Endothelial cell of umbilical vein (primary cell): ENCODE measurements at regions of chr6 and their contacts with region 1.

Region 1: DNA sequence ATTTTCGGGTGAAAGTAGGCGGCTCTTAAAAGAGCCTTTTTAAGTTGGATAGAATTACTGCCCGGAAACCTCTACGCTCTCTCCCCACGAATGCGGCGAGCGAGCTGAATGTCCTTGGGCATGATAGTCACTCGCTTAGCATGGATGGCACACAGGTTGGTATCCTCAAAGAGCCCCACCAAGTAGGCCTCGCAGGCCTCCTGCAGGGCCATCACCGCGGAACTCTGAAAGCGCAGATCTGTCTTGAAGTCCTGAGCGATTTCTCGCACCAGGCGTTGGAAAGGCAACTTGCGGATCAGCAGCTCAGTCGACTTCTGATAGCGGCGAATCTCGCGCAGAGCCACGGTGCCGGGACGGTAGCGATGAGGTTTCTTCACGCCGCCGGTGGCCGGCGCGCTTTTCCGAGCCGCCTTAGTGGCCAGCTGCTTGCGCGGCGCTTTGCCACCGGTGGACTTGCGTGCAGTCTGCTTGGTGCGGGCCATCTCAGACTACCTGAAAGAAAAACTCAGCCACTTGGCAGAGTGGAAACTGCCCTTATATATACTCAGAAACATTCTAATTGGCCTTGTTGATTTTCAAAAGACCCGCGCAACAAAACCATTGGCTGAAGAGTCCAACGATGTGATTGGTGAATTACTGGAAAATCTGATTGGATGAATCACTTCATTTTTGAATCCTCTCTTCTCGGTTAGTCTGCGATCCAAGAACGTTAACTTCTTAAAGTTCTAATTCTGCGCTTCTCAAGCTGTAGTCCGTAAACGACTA is 93.9 kb upstream of the BTN3A2 start:
- DNase-seq: peak; percentile 93
- H3K4me3 ChIP-seq: peak overlapping the region; percentile 41 to 77 (median 51)
- H3K27ac ChIP-seq: peak overlapping the region; percentile 72
- H3K4me1 ChIP-seq: peaks cover 25% of the 10 kb centered on the region
- H3K27me3 ChIP-seq: no peaks in the 10 kb centered on the region
- CTCF ChIP-seq: no peak
- POLR2A ChIP-seq: peak; percentile 90

Region 2: DNA sequence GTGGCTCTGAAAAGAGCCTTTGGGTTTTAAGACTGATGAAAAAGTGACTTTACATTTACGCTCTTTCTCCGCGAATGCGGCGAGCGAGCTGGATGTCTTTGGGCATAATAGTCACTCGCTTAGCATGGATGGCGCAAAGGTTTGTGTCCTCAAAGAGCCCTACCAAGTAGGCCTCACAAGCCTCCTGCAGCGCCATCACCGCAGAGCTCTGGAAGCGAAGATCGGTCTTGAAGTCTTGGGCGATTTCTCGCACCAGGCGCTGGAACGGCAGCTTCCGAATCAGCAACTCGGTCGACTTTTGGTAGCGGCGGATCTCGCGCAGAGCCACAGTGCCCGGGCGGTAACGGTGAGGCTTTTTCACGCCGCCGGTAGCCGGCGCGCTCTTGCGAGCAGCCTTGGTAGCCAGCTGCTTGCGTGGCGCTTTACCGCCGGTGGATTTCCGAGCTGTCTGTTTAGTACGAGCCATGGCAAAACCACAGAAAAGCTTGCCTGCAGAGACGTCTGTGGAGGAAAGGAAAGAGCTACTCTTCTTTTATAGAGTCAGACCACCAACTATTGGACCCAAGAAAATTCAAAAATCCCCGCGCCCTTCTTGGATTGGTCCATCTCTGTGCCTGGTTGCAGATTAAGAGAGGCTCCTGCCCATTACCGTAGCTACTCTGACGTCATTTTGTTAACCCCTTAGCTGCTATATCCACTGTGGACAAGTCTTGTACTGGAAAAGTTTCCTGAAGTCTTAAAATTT is 239.3 kb before region 1 on chr6:
- CTCF ChIA-PET with region 1: no interaction called
- POLR2A ChIA-PET with region 1: no interaction called
- dilution Hi-C with region 1: no loop called
- intact Hi-C with region 1: loop called (anchors 5 kb)
- DNase-seq: peak; percentile 96
- H3K4me3 ChIP-seq: peak overlapping the region; percentile 45 to 78 (median 47)
- H3K27ac ChIP-seq: peak overlapping the region; percentile 88
- H3K4me1 ChIP-seq: peaks cover 33% of the 10 kb centered on the region
- H3K27me3 ChIP-seq: no peaks in the 10 kb centered on the region
- CTCF ChIP-seq: peak in 1 of 2 donors; percentile 29
- POLR2A ChIP-seq: peak; percentile 99

Region 3: DNA sequence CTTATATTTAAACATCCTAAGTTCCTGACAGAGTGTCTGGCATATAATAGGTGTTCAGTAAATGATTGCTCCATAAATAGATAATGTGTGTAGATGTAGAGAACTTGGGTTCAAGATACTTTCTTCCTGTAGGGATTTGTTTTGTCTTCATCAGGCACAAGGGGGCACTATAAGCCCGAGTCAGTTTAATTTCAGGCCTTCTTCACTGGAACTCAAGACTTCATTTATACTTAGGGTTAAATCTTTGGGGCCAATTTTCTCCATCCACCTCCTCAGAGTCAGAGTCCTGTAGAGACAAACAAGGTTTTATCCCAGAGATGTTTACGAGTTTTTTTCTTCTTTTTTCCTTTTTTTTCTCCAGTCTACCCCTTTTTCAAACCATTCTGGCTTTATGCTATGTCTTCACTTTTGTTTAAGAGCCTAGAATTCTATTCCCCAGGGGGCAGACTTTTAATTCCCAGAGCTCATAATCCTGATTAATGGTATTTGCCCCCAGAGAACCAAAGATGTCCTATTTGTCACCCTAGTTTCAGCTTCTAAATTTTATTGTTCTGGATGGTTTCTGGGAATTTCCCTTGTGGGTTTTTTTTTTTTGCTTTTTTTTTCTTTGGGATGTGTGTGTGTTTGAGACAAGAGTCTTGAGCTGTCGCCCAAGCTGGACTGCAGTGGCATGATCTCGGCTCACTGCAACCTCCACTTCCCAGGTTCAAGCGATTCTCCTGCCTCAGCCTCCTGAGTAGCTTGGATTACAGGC is 95.5 kb before region 1 on chr6:
- CTCF ChIA-PET with region 1: no interaction called
- POLR2A ChIA-PET with region 1: no interaction called
- dilution Hi-C with region 1: no loop called
- intact Hi-C with region 1: loop called (anchors 1 kb)
- DNase-seq: peak; percentile 85
- H3K4me3 ChIP-seq: no peak overlapping the region
- H3K27ac ChIP-seq: no peak overlapping the region
- H3K4me1 ChIP-seq: peaks cover 11% of the 10 kb centered on the region
- H3K27me3 ChIP-seq: no peaks in the 10 kb centered on the region
- CTCF ChIP-seq: peak; percentile 46 to 51
- POLR2A ChIP-seq: no peak

Region 4: DNA sequence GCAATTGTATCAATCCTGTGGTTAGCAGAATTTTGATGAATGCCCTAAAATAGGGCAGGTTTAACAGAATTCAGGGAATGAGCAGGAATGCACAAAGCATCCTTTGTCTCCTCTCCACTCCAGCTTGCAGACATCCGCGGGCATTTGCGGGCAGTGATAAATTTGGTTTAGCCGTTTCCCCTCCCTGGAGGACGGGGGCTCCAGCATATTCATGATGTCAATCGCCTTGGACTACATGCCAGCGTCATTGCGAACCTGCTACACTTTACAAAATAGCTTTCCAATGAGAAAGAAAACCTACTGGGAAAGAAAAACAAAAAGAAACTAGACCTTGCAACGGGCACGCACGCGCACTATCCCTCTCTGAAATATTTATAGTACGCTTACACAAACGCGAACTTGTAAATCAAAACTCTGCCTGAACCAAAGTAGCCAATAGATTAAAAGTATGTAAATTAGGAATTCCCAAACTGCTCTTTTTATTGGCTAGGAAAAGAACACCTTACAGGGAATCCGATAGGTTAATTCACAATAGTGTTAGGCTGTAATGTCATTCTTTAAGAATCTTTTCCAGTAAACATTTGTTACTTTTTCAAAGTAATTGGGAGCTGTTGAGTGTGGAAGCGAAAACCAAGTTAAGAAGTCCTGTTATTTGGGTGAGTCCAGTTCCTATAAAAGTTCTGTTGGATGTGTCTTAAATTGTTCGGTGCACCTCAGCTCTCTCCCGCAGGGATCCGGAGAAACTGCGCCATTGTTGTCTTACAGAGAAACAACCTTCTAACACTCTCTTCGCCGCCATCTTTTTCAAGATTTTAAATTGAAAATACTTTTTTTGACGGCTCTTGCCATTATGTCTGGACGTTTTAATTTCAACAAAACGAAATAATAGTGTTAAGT is 47.2 kb before region 1 on chr6:
- CTCF ChIA-PET with region 1: no interaction called
- POLR2A ChIA-PET with region 1: interaction called, 6 read pairs
- dilution Hi-C with region 1: no loop called
- intact Hi-C with region 1: loop called (anchors 2 kb)
- DNase-seq: peak; percentile 94
- H3K4me3 ChIP-seq: peak overlapping the region; percentile 47 to 94 (median 77)
- H3K27ac ChIP-seq: peak overlapping the region; percentile 96
- H3K4me1 ChIP-seq: peaks cover 14% of the 10 kb centered on the region
- H3K27me3 ChIP-seq: no peaks in the 10 kb centered on the region
- CTCF ChIP-seq: no peak
- POLR2A ChIP-seq: peak; percentile 71

Region 5: GRCh38 chr6:26240154-26241032 is 30.7 kb before region 1 on chr6:
- CTCF ChIA-PET with region 1: interaction called, 3 read pairs
- POLR2A ChIA-PET with region 1: interaction called, 18 read pairs
- dilution Hi-C with region 1: no loop called
- intact Hi-C with region 1: loop called (anchors 1 kb)
- DNase-seq: peak; percentile 85
- H3K4me3 ChIP-seq: peak overlapping the region; percentile 40 to 77 (median 66)
- H3K27ac ChIP-seq: peak overlapping the region; percentile 79
- H3K4me1 ChIP-seq: peaks cover 3% of the 10 kb centered on the region
- H3K27me3 ChIP-seq: no peaks in the 10 kb centered on the region
- CTCF ChIP-seq: no peak
- POLR2A ChIP-seq: peak; percentile 98

Region 6: DNA sequence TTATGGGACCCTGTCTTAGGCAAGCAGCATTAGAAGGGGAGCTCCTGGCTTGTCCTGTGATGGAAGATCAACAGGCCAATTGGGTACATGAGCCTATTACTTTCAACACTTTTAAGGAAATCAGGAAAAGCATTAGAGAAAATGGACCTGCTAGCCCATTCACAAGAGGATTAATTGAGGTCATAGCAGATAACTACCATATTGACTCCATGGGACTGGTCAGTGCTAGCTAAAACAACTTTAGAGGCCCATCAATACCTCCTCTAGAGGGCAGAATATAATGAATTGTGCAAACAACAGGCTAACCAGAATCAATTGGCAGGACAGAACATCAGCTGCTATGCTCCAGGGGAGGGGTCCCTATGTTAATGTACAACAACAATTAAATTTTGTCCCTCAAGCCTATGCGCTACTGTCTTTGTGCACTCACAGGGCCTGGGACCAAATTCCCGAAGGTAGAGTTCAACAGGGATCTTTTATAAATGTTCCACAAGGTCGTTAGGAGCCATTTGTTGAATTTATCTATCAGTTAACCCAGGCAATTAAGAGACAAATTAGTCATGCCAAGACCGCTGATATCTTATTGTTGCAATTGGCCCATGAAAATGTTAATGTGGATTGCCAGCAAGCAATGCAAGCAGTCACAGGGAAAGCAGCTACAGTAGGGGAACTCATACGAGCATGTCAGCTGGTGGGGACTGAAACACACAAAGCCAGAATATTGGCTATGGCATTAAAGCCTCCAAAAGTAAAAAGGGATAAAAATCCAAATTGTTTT is 12.7 kb before region 1 on chr6:
- CTCF ChIA-PET with region 1: interaction called, 29 read pairs
- POLR2A ChIA-PET with region 1: interaction called, 4 read pairs
- dilution Hi-C with region 1: no loop called
- intact Hi-C with region 1: no loop called
- DNase-seq: no peak
- H3K4me3 ChIP-seq: no peak overlapping the region
- H3K27ac ChIP-seq: no peak overlapping the region
- H3K4me1 ChIP-seq: no peaks in the 10 kb centered on the region
- H3K27me3 ChIP-seq: peaks cover 12 to 13% of the 10 kb centered on the region in 2 experiments
- CTCF ChIP-seq: peak; percentile 13 to 17
- POLR2A ChIP-seq: no peak

Region 7: DNA sequence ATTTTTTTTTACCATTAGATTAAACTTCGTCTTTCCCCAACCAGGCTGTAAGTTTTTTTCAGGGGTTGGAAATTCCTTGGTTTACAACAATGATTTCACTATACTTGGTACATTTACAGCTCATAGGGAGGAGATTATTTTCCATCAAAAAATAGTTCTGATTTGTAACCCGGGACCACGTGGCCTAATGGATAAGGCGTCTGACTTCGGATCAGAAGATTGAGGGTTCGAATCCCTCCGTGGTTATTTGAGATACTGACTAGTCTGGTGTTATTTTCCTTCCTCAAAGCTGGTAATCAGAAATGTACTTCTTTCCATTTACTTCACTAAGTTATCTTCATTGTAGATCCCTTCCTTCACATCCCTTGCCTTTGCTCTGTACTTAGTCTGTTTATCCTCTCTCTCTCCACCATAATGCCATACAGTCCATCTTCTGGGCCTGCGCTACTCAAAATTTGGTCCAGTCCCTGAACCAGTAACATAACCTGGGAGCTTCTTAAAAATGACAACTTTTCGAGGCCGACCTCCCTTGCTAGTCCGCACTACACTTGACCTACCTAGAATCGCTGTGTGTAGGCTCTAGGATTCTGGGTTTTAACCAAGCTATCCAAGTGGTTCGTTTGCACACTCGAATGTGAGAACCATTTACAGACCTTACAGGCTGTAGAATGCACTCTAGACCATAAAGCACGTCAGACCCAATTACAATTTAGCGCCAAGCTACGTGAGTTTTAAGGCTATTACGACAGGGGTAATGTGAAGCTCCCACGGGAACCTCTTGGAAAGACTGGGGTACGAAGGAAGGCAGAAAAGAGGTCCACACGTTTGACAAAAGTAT is 51.8 kb after region 1 on chr6:
- CTCF ChIA-PET with region 1: no interaction called
- POLR2A ChIA-PET with region 1: no interaction called
- dilution Hi-C with region 1: no loop called
- intact Hi-C with region 1: loop called (anchors 2 kb)
- DNase-seq: peak; percentile 90
- H3K4me3 ChIP-seq: peak overlapping the region; percentile 50 to 85 (median 85)
- H3K27ac ChIP-seq: peak overlapping the region; percentile 44
- H3K4me1 ChIP-seq: peaks cover 6% of the 10 kb centered on the region
- H3K27me3 ChIP-seq: no peaks in the 10 kb centered on the region
- CTCF ChIP-seq: no peak
- POLR2A ChIP-seq: no peak